Activated naive CD4-positive, alpha-beta T cell treated with anti-CD3 and anti-CD28 coated beads for 36 hours (primary cell): ENCODE measurements at regions of chr17 and their contacts with region 1.

Region 1: DNA sequence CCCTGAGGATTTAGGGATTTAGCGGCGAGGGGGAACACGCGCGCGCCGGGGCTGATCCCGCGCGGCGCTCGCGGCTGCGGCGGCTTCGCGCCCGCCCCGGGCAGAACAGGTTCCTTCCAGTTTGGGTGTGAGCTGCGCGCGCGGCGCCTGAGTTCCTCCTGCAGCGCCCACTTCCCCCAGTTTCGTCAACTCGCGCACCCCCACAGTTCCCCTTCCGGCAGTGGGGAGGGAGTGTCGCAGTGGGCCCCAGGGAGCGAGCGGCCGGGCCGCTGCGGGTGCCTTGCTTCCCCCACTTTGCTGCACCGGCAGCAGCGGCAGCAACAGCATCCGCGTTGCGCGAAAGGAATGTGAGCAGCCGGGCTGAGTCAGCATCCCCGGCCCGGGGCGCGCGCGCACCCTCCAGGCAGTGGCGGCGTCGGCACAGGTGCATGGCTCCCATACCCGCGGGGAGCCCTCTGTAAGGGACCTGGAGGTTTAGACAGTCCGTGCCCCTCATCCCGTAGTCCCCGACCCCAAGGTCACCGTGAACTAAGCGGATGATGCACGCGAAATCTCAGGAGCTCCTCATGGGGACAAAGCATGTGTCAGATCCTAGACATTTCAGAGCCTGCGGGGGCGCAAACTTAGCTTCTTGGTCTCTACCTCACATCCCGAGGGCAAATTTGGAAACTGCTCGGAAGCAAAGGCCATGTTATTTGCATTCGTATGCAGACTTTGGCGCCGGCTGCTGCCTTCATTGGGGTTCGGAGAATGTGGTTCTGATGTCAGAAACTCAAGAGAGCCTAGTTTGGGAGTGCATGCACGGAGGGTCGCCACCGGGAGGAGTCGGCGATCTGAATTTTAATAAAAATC is 775 bp downstream of the ARSG start:
- DNase-seq: peak; percentile 85
- H3K4me3 Mint-ChIP-seq: peak overlapping the region; percentile 81
- H3K27ac Mint-ChIP-seq: peak overlapping the region; percentile 84
- H3K4me1 Mint-ChIP-seq: peaks cover 57% of the 10 kb centered on the region
- H3K27me3 Mint-ChIP-seq: no peaks in the 10 kb centered on the region

Region 2: GRCh38 chr17:67922503-67922902 is 369.6 kb before region 1 on chr17:
- CTCF ChIA-PET with region 1: no interaction called
- intact Hi-C with region 1: no loop called
- DNase-seq: no peak
- H3K4me3 Mint-ChIP-seq: no peak overlapping the region
- H3K27ac Mint-ChIP-seq: no peak overlapping the region
- H3K4me1 Mint-ChIP-seq: no peaks in the 10 kb centered on the region
- H3K27me3 Mint-ChIP-seq: no peaks in the 10 kb centered on the region

Region 3: GRCh38 chr17:68238164-68238872 is 53.8 kb before region 1 on chr17:
- CTCF ChIA-PET with region 1: no interaction called
- intact Hi-C with region 1: loop called (anchors 2 kb)
- DNase-seq: no peak
- H3K4me3 Mint-ChIP-seq: peak overlapping the region; percentile 74
- H3K27ac Mint-ChIP-seq: peak overlapping the region; percentile 94
- H3K4me1 Mint-ChIP-seq: peaks cover 54% of the 10 kb centered on the region
- H3K27me3 Mint-ChIP-seq: no peaks in the 10 kb centered on the region

Region 4: DNA sequence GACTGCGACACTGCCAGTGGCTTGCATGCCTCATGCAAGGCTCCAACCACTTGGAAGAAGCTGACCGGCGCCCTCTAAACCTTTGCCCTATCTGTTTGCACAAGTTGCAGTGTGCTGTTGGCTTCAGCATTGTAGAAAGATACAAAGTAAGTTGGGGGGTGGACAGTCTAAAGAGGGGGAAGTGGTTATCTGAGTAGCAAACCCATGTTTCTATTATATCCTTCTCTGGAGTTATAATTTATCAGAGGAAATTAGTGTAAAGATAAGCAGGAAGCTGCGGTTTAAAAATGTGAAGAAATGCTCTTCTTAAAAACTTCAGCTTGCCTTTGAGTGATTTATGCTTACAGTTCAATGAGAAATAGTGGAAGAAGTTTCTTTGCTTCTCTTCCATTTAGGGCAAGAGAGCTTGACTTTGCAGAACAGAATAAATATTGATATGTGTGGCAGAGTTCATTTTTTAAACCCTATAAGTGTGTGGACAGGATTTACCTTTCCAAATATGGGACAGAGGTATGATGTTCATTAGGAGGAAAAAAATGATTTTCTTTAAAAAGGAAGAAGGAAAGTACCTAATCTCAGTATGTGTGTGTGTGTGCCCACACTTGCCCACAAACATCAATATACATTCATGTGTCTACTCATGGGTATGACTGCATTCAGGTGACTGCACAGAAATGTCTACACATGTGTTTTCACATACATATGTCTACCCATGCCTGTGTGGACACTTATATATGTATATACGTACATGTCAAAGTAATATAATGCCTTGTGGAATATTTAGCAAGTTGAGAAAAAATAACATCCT is 36.1 kb before region 1 on chr17:
- CTCF ChIA-PET with region 1: no interaction called
- intact Hi-C with region 1: loop called (anchors 2 kb)
- DNase-seq: peak; percentile 54
- H3K4me3 Mint-ChIP-seq: no peak overlapping the region
- H3K27ac Mint-ChIP-seq: peak overlapping the region; percentile 92
- H3K4me1 Mint-ChIP-seq: peaks cover 76% of the 10 kb centered on the region
- H3K27me3 Mint-ChIP-seq: no peaks in the 10 kb centered on the region

Region 5: DNA sequence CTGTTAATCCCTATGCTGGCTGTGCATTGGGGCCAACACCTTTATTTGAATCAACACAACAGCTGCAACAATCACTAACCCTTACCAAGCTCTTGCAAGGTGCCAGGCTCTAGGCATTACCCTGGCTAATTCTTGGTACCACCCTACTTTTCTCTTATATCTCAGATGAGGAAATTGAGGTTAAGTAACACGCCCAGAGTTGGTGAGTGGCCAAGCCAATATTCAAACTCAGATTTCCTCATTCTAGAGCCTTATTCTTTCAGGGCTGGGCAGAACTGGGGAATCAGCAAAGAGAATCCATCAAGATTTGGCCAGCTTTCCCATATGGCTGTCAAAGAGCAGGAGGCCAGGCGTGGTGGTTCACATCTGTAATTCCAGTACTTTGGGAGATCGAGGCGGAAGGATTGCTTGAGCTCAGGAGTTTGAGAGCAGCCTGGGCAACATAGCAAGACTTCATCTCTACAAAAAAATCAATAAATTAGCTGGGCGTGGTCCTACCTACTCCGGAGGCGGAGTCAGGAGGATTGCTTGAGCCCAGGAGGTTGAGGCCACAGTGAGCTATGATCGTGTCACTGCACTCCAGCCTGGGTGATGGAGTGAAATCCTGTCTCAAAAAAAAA is 23.0 kb after region 1 on chr17:
- CTCF ChIA-PET with region 1: no interaction called
- intact Hi-C with region 1: no loop called
- DNase-seq: no peak
- H3K4me3 Mint-ChIP-seq: no peak overlapping the region
- H3K27ac Mint-ChIP-seq: no peak overlapping the region
- H3K4me1 Mint-ChIP-seq: peaks cover 48% of the 10 kb centered on the region
- H3K27me3 Mint-ChIP-seq: no peaks in the 10 kb centered on the region

Region 6: GRCh38 chr17:68356520-68356919 is 64.5 kb after region 1 on chr17:
- CTCF ChIA-PET with region 1: interaction called, 3 read pairs
- intact Hi-C with region 1: loop called (anchors 1 kb)
- DNase-seq: peak; percentile 85
- H3K4me3 Mint-ChIP-seq: no peak overlapping the region
- H3K27ac Mint-ChIP-seq: peak overlapping the region; percentile 46
- H3K4me1 Mint-ChIP-seq: peaks cover 49% of the 10 kb centered on the region
- H3K27me3 Mint-ChIP-seq: no peaks in the 10 kb centered on the region

Region 7: GRCh38 chr17:68435876-68436842 is 144.1 kb after region 1 on chr17:
- CTCF ChIA-PET with region 1: interaction called, 10 read pairs
- intact Hi-C with region 1: loop called (anchors 1 kb)
- DNase-seq: peak; percentile 94
- H3K4me3 Mint-ChIP-seq: no peak overlapping the region
- H3K27ac Mint-ChIP-seq: no peak overlapping the region
- H3K4me1 Mint-ChIP-seq: peaks cover 35% of the 10 kb centered on the region
- H3K27me3 Mint-ChIP-seq: no peaks in the 10 kb centered on the region

Region 8: DNA sequence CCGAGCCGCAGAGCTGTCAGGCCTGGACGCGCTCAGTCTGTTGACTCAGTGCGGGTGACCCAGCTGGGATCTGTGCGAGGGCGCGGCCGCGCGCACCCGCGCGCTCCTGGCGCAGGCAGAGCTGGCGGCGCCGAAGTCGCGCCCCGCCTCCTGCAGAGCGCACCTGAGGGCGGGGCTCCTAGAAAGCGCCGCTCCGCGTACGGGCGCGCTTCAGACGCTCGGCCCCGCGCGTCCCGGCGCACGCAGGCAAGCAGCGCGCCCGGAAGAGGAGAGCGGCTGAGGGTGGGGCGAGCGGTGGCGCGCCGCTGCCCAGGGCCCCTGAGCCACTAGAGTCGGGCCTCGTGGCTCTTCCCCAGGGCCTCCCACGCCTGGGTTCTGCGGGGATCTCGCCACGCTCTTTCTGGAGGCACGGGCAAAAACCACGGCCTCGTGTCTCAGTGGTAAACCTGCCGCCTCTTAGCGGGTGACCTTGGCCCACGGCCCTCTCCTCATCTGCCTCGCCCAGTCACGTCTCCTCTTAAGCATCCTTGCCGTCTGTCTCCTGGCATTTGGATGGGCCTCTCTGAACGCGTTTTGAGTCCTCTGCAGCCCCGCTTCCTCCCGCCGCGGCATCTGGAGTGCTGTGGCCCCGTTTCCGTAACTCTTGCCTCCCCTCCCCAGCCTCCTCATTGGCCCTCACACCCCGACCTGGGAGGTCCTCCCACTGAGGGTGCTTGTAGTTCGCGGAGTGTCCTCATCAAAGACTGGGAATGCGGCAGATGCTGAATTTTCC is 1035.2 kb after region 1 on chr17 and contains the start of gene ABCA5:
- CTCF ChIA-PET with region 1: no interaction called
- intact Hi-C with region 1: loop called (anchors 2 kb)
- DNase-seq: peak; percentile 92
- H3K4me3 Mint-ChIP-seq: peak within 1 kb of the TSS; percentile 93
- H3K27ac Mint-ChIP-seq: peak within 1 kb of the TSS; percentile 95
- H3K4me1 Mint-ChIP-seq: peaks cover 31% of the 10 kb centered on the region
- H3K27me3 Mint-ChIP-seq: peaks cover 2% of the 10 kb centered on the region
- total RNA-seq, gene ABCA5: 14.3 to 15.1 TPM